CD14-positive monocyte (primary cell): ENCODE measurements at regions of chr10 and their contacts with region 1.

Region 1: DNA sequence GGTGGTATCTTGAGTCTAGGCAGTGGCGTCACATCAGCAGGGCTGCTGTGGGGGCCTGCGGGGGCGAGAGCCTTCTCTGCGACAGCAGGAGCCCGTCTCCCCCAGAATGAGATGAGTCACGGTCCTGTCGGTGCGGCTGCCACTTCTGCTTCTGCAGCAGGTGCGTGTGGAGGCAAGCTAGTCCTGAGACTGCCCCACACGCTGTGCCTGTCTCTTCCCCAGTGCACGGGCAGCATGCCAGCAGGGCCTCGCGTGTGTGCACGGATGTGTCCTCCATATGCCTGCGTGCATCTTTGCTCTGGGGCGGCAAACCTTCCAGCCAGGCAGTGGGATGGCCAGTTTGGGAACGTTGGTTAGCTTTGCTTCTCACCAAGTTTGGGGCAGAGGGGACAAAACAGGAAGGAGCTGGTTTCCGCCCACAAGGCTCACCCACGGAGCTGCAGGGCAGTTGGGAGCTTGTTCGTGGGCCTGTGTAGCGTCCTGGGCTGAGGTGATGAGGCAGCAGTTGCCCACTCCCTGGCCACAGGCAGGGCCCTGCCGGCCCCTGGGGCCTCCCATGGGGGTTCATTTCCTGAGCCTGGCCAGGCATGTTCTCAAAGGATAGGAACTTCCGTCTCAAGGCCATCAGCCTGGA is 60.8 kb upstream of the PPIF start:
- DNase-seq: peak; percentile 99 to 100 (median 99)
- H3K4me3 ChIP-seq: no peak overlapping the region
- H3K4me3 Mint-ChIP-seq: peak overlapping the region; percentile 52 to 76
- H3K27ac ChIP-seq: peak overlapping the region; percentile 98
- H3K27ac Mint-ChIP-seq: peak overlapping the region; percentile 94 to 99 (median 99)
- H3K4me1 ChIP-seq: peaks cover 66 to 73% of the 10 kb centered on the region in 2 donors
- H3K4me1 Mint-ChIP-seq: peaks cover 83% of the 10 kb centered on the region
- H3K27me3 ChIP-seq: no peaks in the 10 kb centered on the region
- H3K27me3 Mint-ChIP-seq: peaks cover 0 to 1% (median 1%) of the 10 kb centered on the region in 3 donors
- CTCF ChIP-seq: no peak

Region 2: DNA sequence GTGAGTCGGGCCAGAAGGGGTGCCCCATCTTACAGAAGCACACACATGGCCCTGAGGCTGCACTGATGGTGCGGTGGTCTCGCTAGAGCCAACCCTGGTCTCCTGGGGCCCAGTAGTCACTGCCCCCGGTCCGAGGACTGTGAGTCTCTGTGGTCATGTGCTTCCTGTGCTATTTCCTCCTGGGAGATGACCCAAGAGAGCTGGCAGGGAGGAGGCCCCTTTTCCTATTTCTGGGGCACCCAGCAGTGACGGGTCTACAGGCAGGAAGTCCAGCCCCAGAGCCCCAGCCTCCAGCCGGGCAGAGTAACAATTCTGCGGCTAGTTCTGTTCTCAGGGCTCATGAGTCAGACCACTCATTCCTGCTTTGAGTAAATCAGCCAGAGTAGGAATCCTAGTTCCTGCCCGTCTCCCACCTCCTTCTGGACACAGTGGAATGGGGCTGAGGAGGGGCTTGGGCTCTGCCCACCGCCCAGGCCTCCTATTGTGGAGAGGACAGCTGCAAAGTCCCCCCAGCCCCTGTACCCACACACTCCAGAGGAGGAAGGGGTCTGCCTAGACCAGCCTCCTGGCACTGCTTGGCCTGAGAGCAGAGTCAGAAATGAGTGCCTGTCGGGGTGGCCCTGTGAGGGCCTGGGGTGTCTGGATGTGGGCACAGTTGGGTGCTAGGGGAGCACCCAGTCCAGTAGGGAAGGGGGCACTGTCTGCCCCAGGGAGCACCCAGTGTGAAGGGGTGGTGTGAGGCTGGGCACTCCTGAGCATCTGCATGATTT is 19.7 kb before region 1 on chr10:
- intact Hi-C with region 1: loop called in 1 of 2 experiments (anchors 2 kb)
- DNase-seq: peak; percentile 96 to 98 (median 98)
- H3K4me3 ChIP-seq: peak overlapping the region in 1 of 3 experiments; percentile 42
- H3K4me3 Mint-ChIP-seq: peak overlapping the region; percentile 43 to 74
- H3K27ac ChIP-seq: peak overlapping the region; percentile 98 to 100
- H3K27ac Mint-ChIP-seq: peak overlapping the region; percentile 99 to 100 (median 99)
- H3K4me1 ChIP-seq: peaks cover 79 to 86% of the 10 kb centered on the region in 2 donors
- H3K4me1 Mint-ChIP-seq: peaks cover 95% of the 10 kb centered on the region
- H3K27me3 ChIP-seq: no peaks in the 10 kb centered on the region
- H3K27me3 Mint-ChIP-seq: peaks cover 0 to 3% (median 0%) of the 10 kb centered on the region in 3 donors
- CTCF ChIP-seq: no peak

Region 3: DNA sequence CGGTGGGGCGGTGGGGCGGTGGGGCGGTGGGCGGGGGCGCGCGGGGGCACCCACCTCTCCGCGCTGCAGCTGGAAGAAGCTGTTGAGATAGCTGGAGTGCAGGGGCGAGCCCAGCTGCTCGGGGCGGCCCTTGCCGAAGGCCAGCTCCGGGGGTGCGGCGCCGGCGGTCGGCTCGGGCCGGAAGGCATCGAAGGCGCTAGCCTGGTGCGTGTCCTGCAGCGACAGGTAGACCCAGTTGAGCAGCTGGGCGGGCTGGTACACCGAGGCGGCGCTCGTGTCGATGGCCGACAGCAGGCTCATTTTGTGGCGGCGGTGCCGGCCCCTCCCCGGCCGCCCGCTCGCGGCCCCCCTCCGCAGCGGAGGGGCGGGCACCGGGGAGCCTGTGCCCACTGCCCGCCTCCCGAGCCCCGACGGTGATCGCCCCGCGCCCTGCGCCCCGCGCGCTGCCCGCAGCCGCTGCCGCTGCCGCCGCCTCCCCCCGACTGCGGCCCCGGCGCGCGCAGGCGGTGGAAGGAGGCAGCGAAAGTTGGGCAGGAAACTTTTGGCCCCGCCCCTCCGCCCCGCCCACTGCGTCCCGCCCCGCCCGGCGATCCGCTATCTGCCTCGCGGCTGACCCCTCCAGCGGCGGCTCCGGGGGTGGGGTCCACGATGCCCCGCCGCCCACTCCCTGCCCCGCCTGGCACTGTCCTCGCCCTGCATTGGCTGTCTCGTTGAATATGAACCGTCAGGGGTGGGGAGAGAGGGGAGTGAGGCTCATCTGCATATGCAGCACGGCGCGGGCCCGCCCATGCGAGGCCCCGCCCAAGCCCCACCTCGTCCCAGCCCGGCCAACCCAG is 158.9 kb after region 1 on chr10 and contains the start of gene ZCCHC24:
- intact Hi-C with region 1: loop called in 1 of 2 experiments (anchors 10 kb)
- DNase-seq: peak; percentile 93 to 97 (median 94)
- H3K4me3 ChIP-seq: peak within 1 kb of the TSS; percentile 67 to 81 (median 67)
- H3K4me3 Mint-ChIP-seq: peak within 1 kb of the TSS; percentile 97 to 98
- H3K27ac ChIP-seq: peak within 1 kb of the TSS; percentile 43 to 68
- H3K27ac Mint-ChIP-seq: peak within 1 kb of the TSS; percentile 83 to 94 (median 92)
- H3K4me1 ChIP-seq: peaks cover 27 to 39% of the 10 kb centered on the region in 2 donors
- H3K4me1 Mint-ChIP-seq: peaks cover 38% of the 10 kb centered on the region
- H3K27me3 ChIP-seq: peaks cover 0 to 18% of the 10 kb centered on the region in 2 donors
- H3K27me3 Mint-ChIP-seq: peaks cover 19 to 31% (median 23%) of the 10 kb centered on the region in 3 donors
- CTCF ChIP-seq: no peak
- polyA plus RNA-seq, gene ZCCHC24: 3.9 to 5.0 (median 4.0) TPM